A673 (cell line): ENCODE measurements at regions of chr3 and their contacts with region 1.

Region 1: GRCh38 chr3:72957297-72957696 is 39.3 kb upstream of the PPP4R2 start:
- DNase-seq: no peak
- H3K4me3 ChIP-seq: no peak overlapping the region
- H3K27ac ChIP-seq: no peak overlapping the region
- H3K4me1 ChIP-seq: no peaks in the 10 kb centered on the region
- H3K27me3 ChIP-seq: no peaks in the 10 kb centered on the region
- CTCF ChIP-seq: no peak

Region 2: GRCh38 chr3:73007992-73008712 is 50.9 kb after region 1 on chr3:
- CTCF ChIA-PET with region 1: no interaction called
- POLR2A ChIA-PET with region 1: no interaction called
- intact Hi-C with region 1: loop called (anchors 5 kb)
- DNase-seq: no peak
- H3K4me3 ChIP-seq: no peak overlapping the region
- H3K27ac ChIP-seq: no peak overlapping the region
- H3K4me1 ChIP-seq: no peaks in the 10 kb centered on the region
- H3K27me3 ChIP-seq: no peaks in the 10 kb centered on the region
- CTCF ChIP-seq: no peak

Region 3: GRCh38 chr3:73060302-73060723 is 103.0 kb after region 1 on chr3:
- CTCF ChIA-PET with region 1: no interaction called
- POLR2A ChIA-PET with region 1: no interaction called
- intact Hi-C with region 1: no loop called
- DNase-seq: no peak
- H3K4me3 ChIP-seq: no peak overlapping the region
- H3K27ac ChIP-seq: peak overlapping the region; percentile 58
- H3K4me1 ChIP-seq: peaks cover 16% of the 10 kb centered on the region
- H3K27me3 ChIP-seq: no peaks in the 10 kb centered on the region
- CTCF ChIP-seq: no peak